Right cardiac atrium (tissue), 5 donors: ENCODE measurements at regions of chrX and their contacts with region 1.

Region 1: DNA sequence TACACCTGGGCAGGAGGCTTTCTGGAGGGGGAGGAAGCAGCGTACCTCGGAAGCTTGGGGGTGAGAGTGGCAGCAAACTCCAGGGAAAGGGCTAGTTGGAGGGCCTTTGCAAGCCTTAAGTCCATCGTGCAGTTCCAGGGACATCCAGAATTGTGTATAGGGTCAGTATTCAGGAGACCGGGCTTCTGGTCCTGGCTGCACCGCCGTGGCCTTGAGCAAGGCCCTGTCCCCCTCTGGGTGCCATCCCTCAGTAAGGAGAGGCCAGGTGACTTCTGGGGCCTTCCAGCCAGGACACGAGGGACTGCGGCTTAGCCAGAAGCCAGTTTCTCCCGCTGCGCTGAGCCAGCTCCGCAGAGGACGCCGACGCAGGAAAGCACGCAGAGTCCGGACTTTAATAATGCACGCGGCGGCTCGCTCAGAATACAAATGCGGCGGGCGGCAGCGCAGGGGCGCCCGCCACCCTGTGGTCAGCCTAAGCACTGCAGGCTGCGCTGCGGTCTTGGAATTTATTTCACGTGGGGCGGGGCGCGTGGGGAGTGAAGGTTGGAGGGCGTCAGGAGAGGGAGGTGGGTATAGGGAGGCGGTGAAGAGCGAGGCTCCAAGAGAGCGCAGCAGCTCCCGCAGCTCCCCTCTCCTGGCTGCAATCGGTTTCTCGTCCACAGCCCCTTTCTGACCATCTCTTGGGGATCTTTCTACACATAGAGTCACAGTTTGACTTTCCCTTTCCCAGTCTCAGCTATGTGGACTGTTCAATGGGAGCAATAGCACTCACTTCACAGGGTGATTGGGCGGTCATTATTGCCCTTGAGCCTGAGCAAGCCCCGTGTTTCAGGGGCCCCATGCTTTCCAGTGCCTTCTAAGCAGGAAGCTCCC is 94.1 kb upstream of the GPR50 start:
- DNase-seq: peak; percentile 55 to 79 (median 79)
- ATAC-seq: peak; percentile 89 to 90
- H3K4me3 ChIP-seq: no peak overlapping the region
- H3K27ac ChIP-seq: no peak overlapping the region
- H3K4me1 ChIP-seq: no peaks in the 10 kb centered on the region
- H3K27me3 ChIP-seq: no peaks in the 10 kb centered on the region

Region 2: GRCh38 chrX:150772150-150772970 is 310.0 kb before region 1 on chrX:
- intact Hi-C with region 1: loop called (anchors 2 to 5 kb)
- DNase-seq: peak; percentile 71 to 91 (median 90)
- ATAC-seq: peak; percentile 79 to 86
- H3K4me3 ChIP-seq: no peak overlapping the region
- H3K27ac ChIP-seq: no peak overlapping the region
- H3K4me1 ChIP-seq: peaks cover under 1% of the 10 kb centered on the region
- H3K27me3 ChIP-seq: no peaks in the 10 kb centered on the region